ENCODE measurements at regions of chr6 and their contacts with region 1.

Region 1: DNA sequence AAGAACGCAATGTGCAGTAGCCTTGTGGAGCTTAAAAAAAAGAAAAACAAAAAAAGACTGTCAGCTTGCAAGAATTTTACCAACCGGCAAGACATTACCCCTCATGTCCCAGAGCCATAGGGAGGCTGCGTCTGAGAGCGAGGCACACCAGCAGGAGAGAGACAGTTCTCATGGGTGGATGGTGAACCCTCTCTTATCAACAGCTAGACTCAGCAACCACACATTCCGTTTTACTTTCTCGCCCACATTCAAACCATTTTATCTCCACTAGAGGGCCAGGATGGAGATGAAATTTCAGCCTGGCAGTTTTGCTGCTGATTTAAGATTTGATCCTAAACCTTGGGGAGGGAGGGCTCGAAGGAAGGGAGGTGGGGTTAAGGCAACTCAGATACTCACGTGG is 247.0 kb downstream of the ATXN1 start:
- DNase-seq: peak; percentile 53
- ATAC-seq: peak; percentile 52
- H3K4me3 Mint-ChIP-seq: no peak overlapping the region
- H3K27ac Mint-ChIP-seq: peak overlapping the region; percentile 41
- H3K4me1 Mint-ChIP-seq: peaks cover 73% of the 10 kb centered on the region
- H3K27me3 Mint-ChIP-seq: no peaks in the 10 kb centered on the region

Region 2: DNA sequence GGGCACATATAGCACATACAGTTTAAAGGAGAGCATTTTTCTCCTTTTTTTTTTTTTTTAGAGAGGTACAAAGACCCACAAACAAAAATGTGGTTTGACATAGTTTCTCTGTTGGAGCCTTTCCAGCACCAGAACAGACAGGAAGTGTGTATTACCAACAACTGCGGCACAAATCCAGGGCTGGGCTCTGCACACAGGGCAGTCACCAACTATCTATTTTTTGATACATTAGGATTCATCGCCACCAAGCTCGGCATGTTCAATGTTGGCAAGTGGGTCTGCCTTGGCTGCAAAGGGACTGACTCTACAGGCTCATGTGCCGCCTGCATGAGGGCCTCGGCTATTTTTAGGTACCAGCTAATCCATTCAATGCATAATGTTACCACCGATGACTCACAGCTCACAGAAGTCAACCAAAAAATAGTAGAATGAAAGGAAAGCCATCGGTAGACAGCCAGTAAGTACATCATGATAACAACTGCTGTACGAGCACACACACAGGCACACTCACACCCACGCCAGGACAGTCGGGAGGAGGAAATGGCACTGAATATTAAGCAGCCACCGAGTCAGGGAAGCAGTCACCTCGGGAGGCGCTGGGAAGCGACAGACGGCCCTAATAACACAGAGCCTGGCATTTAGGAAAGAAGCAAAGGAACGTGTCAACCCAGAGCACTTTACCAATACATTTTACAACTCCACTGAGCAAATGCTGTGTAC is 194.3 kb before region 1 on chr6:
- CTCF ChIA-PET with region 1: interaction called, 10 read pairs
- DNase-seq: peak; percentile 82
- ATAC-seq: peak; percentile 73
- H3K4me3 Mint-ChIP-seq: peak overlapping the region; percentile 66
- H3K27ac Mint-ChIP-seq: peak overlapping the region; percentile 91
- H3K4me1 Mint-ChIP-seq: peaks cover 77% of the 10 kb centered on the region
- H3K27me3 Mint-ChIP-seq: no peaks in the 10 kb centered on the region

Region 3: DNA sequence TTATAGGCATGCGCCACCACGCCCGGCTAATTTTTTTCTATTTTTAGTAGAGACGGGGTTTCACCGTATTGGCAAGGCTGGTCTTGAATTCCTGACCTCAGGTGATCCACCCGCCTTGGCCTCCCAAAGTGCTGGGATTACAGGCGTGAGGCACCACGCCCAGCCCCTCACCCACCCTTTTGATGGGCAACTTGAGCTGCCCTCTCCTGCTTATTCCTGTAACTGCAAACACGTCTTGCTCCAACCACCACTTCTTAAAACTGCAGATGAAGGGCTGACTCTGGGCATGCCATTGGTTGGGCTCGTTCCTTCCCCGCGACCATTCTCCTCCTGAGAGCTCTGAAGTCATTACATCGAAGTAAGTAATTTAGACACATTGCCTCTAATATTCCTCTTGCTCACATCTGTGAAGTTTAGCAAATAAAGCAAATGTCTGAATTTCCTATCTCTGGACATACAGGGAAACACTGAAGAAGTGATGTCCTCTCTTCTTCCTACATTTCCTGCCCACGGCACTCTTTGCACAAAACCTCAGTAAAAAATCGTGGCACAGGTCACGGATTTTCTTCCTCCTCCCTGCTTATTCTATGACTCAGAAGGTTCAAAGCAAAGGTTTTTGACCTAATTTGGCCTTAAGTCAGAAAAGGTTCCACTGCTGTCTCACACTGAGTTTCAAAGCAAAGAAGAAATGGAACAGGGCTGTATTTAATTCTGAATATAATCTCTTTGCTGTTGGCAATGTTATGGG is 158.4 kb before region 1 on chr6:
- CTCF ChIA-PET with region 1: no interaction called
- DNase-seq: no peak
- ATAC-seq: no peak
- H3K4me3 Mint-ChIP-seq: no peak overlapping the region
- H3K27ac Mint-ChIP-seq: no peak overlapping the region
- H3K4me1 Mint-ChIP-seq: peaks cover 2% of the 10 kb centered on the region
- H3K27me3 Mint-ChIP-seq: no peaks in the 10 kb centered on the region

Region 4: DNA sequence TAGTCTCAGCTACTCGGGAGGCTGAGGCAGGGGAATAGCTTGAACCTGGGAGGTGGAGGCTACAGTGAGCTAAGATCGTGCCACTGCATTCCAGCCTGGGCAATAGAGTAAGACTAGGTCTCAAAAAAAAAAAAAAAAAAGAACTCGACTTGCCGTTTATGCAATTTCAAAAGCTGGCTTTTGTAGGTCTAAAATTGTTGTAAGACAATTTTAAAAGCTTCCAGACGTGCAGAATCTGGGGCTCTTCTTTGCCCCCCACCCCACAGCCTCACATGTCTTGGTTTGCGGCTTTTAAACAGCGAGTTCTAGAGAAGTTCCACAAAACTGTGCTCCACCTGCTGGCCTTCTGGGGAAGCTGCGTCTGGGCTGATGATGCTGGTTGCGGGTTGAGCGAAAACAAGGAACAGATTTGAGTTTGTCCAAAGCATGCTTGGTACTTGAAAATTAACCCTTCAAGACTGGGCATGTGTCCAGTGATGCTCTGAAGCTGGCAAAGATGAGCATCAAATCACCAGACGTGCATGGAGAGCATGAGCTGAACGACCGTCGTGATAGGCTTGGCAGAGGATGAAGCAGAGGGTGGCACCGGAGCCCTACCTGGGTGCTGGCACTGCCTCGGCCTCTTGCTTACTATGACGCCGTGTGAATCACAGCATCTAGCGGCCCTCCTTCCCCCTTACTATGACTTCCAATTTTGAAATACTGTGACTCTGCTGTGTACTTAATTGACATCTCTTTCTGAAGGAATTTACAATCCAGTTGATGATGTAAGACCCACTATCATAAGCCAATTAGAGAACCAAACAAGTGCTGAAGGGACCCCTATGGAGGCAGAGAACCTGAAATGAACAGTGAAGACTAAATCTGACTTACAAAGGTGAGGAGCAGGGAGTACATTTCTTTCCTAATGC is 104.5 kb before region 1 on chr6:
- CTCF ChIA-PET with region 1: interaction called, 10 read pairs
- DNase-seq: peak; percentile 75
- ATAC-seq: peak; percentile 54
- H3K4me3 Mint-ChIP-seq: no peak overlapping the region
- H3K27ac Mint-ChIP-seq: peak overlapping the region; percentile 56
- H3K4me1 Mint-ChIP-seq: peaks cover 47% of the 10 kb centered on the region
- H3K27me3 Mint-ChIP-seq: no peaks in the 10 kb centered on the region

Region 5: GRCh38 chr6:16503970-16504415 is 10.3 kb before region 1 on chr6:
- CTCF ChIA-PET with region 1: interaction called, 14 read pairs
- DNase-seq: peak; percentile 63
- ATAC-seq: peak; percentile 88
- H3K4me3 Mint-ChIP-seq: peak overlapping the region; percentile 30
- H3K27ac Mint-ChIP-seq: peak overlapping the region; percentile 69
- H3K4me1 Mint-ChIP-seq: peaks cover 44% of the 10 kb centered on the region
- H3K27me3 Mint-ChIP-seq: no peaks in the 10 kb centered on the region

Region 6: DNA sequence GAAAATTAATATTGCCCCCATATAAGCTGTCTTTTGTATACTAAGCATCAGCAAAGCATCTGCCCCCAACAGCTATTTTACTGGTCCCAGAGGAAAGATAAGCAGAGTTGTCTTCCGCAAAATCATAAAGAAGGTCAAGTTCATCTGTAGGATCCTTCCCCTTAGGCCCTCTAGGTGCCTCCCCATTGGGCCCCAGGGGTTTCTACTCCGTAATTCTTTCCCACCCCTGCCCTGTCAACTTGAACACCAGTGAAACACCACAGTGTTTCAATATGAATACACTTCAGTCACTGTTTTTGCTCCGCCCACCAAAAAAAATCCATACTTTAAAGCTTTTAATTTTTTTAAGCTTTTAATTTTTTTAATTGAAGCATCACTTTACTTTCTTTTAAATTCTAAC is 87.8 kb after region 1 on chr6:
- CTCF ChIA-PET with region 1: no interaction called
- DNase-seq: peak; percentile 74
- ATAC-seq: peak; percentile 97
- H3K4me3 Mint-ChIP-seq: no peak overlapping the region
- H3K27ac Mint-ChIP-seq: peak overlapping the region; percentile 61
- H3K4me1 Mint-ChIP-seq: peaks cover 48% of the 10 kb centered on the region
- H3K27me3 Mint-ChIP-seq: no peaks in the 10 kb centered on the region

Region 7: GRCh38 chr6:16731478-16732051 is 217.3 kb after region 1 on chr6:
- CTCF ChIA-PET with region 1: interaction called, 23 read pairs
- DNase-seq: peak; percentile 76
- ATAC-seq: peak; percentile 85
- H3K4me3 Mint-ChIP-seq: peak overlapping the region; percentile 74
- H3K27ac Mint-ChIP-seq: peak overlapping the region; percentile 94
- H3K4me1 Mint-ChIP-seq: peaks cover 70% of the 10 kb centered on the region
- H3K27me3 Mint-ChIP-seq: no peaks in the 10 kb centered on the region